Natural killer cell (primary cell): ENCODE measurements at regions of chr20 and their contacts with region 1.

Region 1: GRCh38 chr20:3854462-3854871 is 7.8 kb downstream of the MAVS start:
- DNase-seq: no peak
- ATAC-seq: no peak
- H3K4me3 ChIP-seq: no peak overlapping the region
- H3K4me3 Mint-ChIP-seq: no peak overlapping the region
- H3K27ac ChIP-seq: no peak overlapping the region
- H3K27ac Mint-ChIP-seq: no peak overlapping the region
- H3K4me1 ChIP-seq: no peaks in the 10 kb centered on the region
- H3K4me1 Mint-ChIP-seq: peaks cover 15 to 16% of the 10 kb centered on the region in 2 donors
- H3K27me3 ChIP-seq: no peaks in the 10 kb centered on the region
- H3K27me3 Mint-ChIP-seq: no peaks in the 10 kb centered on the region
- CTCF ChIP-seq: no peak

Region 2: GRCh38 chr20:3753098-3753980 is 101.1 kb before region 1 on chr20:
- intact Hi-C with region 1: loop called (anchors 1 kb)
- DNase-seq: peak; percentile 53 to 84
- ATAC-seq: peak; percentile 78 to 97 (median 84)
- H3K4me3 ChIP-seq: no peak overlapping the region
- H3K4me3 Mint-ChIP-seq: peak overlapping the region; percentile 35
- H3K27ac ChIP-seq: no peak overlapping the region
- H3K27ac Mint-ChIP-seq: no peak overlapping the region
- H3K4me1 ChIP-seq: no peaks in the 10 kb centered on the region
- H3K4me1 Mint-ChIP-seq: peaks cover 0 to 4% of the 10 kb centered on the region in 2 donors
- H3K27me3 ChIP-seq: no peaks in the 10 kb centered on the region
- H3K27me3 Mint-ChIP-seq: no peaks in the 10 kb centered on the region
- CTCF ChIP-seq: peak; percentile 71

Region 3: DNA sequence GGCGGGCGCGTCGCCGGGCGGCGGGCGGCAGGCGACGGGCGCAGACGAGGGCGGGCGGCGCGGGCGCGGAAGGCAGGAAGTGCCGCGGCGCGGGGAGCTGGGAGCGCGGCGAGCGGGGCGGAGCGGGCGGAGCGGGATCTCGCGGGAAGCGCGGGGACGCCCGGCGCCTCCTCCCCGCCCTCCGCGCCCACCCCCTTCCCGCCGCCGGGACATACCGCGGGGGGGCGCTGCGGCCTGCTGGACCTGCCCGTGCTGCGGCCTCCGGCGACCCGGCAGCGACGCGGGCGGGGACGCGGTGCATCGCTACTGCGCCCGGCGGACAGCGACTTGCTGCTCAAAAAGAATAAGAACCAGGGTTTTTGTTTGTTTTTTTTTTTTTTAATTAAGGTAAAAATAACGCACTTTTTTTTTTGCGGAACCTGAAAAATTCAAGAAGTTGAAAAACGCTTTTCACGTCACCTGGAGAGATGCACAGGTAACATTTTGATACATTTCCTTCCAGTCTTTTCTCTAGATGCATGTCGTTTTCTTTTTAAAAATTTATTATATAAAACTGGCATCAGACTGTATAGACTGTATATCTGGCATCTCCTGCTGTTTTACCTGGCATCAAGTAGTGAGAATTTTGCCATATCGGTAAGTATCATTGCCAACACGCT is 67.7 kb before region 1 on chr20 and contains the start of gene CENPB:
- intact Hi-C with region 1: loop called (anchors 2 kb)
- DNase-seq: peak; percentile 93
- ATAC-seq: peak; percentile 93 to 98 (median 95)
- H3K4me3 ChIP-seq: peak within 1 kb of the TSS; percentile 50
- H3K4me3 Mint-ChIP-seq: peak within 1 kb of the TSS; percentile 84
- H3K27ac ChIP-seq: peak within 1 kb of the TSS; percentile 57
- H3K27ac Mint-ChIP-seq: peak within 1 kb of the TSS; percentile 65 to 69
- H3K4me1 ChIP-seq: peaks cover 25% of the 10 kb centered on the region
- H3K4me1 Mint-ChIP-seq: peaks cover 18 to 44% of the 10 kb centered on the region in 2 donors
- H3K27me3 ChIP-seq: no peaks in the 10 kb centered on the region
- H3K27me3 Mint-ChIP-seq: no peaks in the 10 kb centered on the region
- CTCF ChIP-seq: peak; percentile 84
- total RNA-seq, gene CENPB: 46.7 to 62.6 (median 55.4) TPM